ENCODE measurements at regions of chr1 and their contacts with region 1.

Region 1: GRCh38 chr1:91511386-91511785 is 10.7 kb downstream of the CDC7 start:
- DNase-seq: peak in 3 of 14 experiments; percentile 63 to 70 (median 68)
- ATAC-seq: peak; percentile 58
- H3K4me3 ChIP-seq: no peak overlapping the region
- H3K4me3 Mint-ChIP-seq: no peak overlapping the region
- H3K27ac ChIP-seq: no peak overlapping the region
- H3K27ac Mint-ChIP-seq: no peak overlapping the region
- H3K4me1 ChIP-seq: no peaks in the 10 kb centered on the region
- H3K4me1 Mint-ChIP-seq: peaks cover 6% of the 10 kb centered on the region
- H3K27me3 ChIP-seq: no peaks in the 10 kb centered on the region
- H3K27me3 Mint-ChIP-seq: no peaks in the 10 kb centered on the region
- CTCF ChIP-seq: peak; percentile 74

Region 2: DNA sequence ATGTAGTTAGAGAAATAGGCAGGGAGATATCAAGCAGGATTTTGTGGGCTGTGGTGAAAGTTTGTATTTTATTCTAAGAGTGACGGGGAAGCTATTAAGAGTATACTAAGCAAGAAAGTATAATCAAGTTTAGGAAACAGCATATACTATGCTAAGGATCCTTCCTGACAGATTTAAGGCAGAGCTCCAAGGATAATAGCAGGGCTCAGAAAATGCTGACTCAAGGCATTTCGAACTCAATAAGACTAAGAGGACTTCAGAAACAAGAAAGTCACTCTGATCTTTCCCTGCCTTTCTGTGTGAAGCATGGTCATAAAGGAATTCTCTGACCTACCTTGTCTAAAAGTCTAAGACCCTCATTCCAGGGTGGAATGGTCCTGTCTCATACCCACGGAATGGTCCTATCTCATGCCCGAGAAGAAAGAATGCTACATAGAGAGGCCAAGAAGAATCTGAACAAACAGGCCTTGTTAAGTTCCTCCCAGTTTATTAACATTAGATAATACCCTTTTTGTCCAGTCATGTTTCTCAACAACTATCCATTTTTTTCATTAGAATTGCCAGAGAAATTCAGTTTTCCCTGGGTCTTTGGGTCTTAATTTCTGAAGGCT is 165.9 kb before region 1 on chr1:
- CTCF ChIA-PET with region 1: no interaction called
- POLR2A ChIA-PET with region 1: no interaction called
- intact Hi-C with region 1: no loop called
- DNase-seq: no peak
- ATAC-seq: no peak
- H3K4me3 ChIP-seq: no peak overlapping the region
- H3K4me3 Mint-ChIP-seq: no peak overlapping the region
- H3K27ac ChIP-seq: no peak overlapping the region
- H3K27ac Mint-ChIP-seq: no peak overlapping the region
- H3K4me1 ChIP-seq: no peaks in the 10 kb centered on the region
- H3K4me1 Mint-ChIP-seq: no peaks in the 10 kb centered on the region
- H3K27me3 ChIP-seq: no peaks in the 10 kb centered on the region
- H3K27me3 Mint-ChIP-seq: no peaks in the 10 kb centered on the region
- CTCF ChIP-seq: no peak

Region 3: DNA sequence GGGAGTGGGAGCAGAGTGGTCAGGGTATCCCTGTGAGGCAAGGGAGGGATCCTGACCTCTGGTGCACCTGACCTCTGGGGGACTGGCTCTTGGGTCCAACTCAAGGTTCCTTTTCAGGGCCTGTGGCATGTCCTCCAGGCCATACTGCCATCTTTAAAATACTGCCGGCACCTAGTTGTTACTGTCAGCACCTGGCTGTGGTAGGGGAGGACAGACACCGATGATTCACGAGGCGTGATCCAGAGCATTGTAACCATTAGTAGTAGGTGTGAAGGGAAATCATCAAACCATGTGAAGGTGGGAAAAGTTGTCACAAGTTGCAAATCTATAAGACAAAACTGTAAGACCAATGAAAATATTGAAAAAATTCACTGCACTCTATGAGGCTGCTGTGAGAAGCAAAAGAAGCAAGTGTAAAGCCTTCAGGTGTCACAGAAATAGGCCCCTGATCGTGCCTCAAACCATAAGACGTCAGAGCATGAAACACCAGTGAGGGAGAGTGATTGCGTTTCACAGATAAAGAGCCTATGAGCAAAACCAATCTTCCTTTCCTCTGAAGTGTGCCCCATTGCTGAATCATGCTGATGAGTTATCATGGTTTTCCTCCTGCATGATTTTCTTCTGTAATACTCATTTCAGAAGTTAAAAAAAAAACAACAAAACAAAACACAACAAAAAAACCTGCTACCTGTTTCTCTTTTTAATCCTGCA is 44.6 kb after region 1 on chr1:
- CTCF ChIA-PET with region 1: interaction called, 3 read pairs
- POLR2A ChIA-PET with region 1: no interaction called
- intact Hi-C with region 1: loop called in 1 of 2 experiments (anchors 5 kb)
- DNase-seq: peak in 13 of 14 experiments; percentile 29 to 92 (median 46)
- ATAC-seq: peak; percentile 87
- H3K4me3 ChIP-seq: no peak overlapping the region
- H3K4me3 Mint-ChIP-seq: peak overlapping the region; percentile 2
- H3K27ac ChIP-seq: peak overlapping the region; percentile 33 to 83
- H3K27ac Mint-ChIP-seq: peak overlapping the region; percentile 90
- H3K4me1 ChIP-seq: peaks cover 66% of the 10 kb centered on the region
- H3K4me1 Mint-ChIP-seq: peaks cover 86% of the 10 kb centered on the region
- H3K27me3 ChIP-seq: no peaks in the 10 kb centered on the region
- H3K27me3 Mint-ChIP-seq: no peaks in the 10 kb centered on the region
- CTCF ChIP-seq: no peak

Region 4: GRCh38 chr1:91611498-91611917 is 100.1 kb after region 1 on chr1:
- CTCF ChIA-PET with region 1: no interaction called
- POLR2A ChIA-PET with region 1: no interaction called
- intact Hi-C with region 1: no loop called
- DNase-seq: no peak
- ATAC-seq: no peak
- H3K4me3 ChIP-seq: no peak overlapping the region
- H3K4me3 Mint-ChIP-seq: no peak overlapping the region
- H3K27ac ChIP-seq: no peak overlapping the region
- H3K27ac Mint-ChIP-seq: no peak overlapping the region
- H3K4me1 ChIP-seq: no peaks in the 10 kb centered on the region
- H3K4me1 Mint-ChIP-seq: no peaks in the 10 kb centered on the region
- H3K27me3 ChIP-seq: no peaks in the 10 kb centered on the region
- H3K27me3 Mint-ChIP-seq: no peaks in the 10 kb centered on the region
- CTCF ChIP-seq: no peak

Region 5: DNA sequence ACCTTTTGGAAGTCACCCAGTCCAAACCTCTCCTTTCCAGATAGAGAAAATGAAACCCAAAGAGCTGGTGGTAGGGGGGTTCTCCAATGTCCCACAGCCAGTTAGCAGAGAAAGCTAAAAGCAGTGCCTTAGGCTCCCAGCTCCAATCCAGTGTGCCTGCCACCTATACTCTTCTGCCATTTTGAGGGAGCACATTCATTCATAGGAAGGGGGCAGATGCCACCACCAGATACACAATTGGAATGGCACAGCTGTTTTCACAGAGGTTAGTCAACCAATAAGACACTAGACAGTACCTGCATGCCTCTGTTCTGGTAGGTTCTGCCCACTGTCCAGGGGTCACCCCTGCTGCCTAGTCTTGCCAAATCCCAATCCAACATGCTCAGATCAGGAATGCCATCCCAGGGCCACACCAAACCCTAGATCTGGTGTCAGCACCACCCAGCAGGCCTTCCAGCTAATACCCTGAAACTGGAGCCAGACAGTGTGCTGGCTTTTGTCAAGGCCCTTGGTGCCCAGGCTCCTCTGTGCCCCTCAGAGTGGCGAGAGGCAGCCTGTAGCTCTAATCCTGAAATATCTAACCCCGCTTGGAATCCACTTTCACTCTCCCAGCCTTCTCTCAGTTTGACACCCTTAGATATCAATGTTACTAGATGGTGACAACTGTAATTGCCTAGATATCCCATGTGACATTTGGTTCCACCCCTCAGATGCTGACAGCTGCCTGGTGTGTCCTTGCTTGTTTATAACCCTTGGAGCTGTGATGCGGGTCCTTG is 195.9 kb after region 1 on chr1:
- CTCF ChIA-PET with region 1: no interaction called
- POLR2A ChIA-PET with region 1: no interaction called
- intact Hi-C with region 1: loop called in 1 of 2 experiments (anchors 5 kb)
- DNase-seq: no peak
- ATAC-seq: no peak
- H3K4me3 ChIP-seq: no peak overlapping the region
- H3K4me3 Mint-ChIP-seq: no peak overlapping the region
- H3K27ac ChIP-seq: no peak overlapping the region
- H3K27ac Mint-ChIP-seq: no peak overlapping the region
- H3K4me1 ChIP-seq: no peaks in the 10 kb centered on the region
- H3K4me1 Mint-ChIP-seq: no peaks in the 10 kb centered on the region
- H3K27me3 ChIP-seq: no peaks in the 10 kb centered on the region
- H3K27me3 Mint-ChIP-seq: no peaks in the 10 kb centered on the region
- CTCF ChIP-seq: no peak

Region 6: GRCh38 chr1:91803847-91804545 is 292.6 kb after region 1 on chr1:
- CTCF ChIA-PET with region 1: no interaction called
- POLR2A ChIA-PET with region 1: no interaction called
- intact Hi-C with region 1: loop called (anchors 5 to 10 kb)
- DNase-seq: peak; percentile 49 to 94 (median 68)
- ATAC-seq: peak; percentile 54
- H3K4me3 ChIP-seq: peak overlapping the region; percentile 40
- H3K4me3 Mint-ChIP-seq: peak overlapping the region; percentile 58
- H3K27ac ChIP-seq: peak overlapping the region; percentile 97 to 99
- H3K27ac Mint-ChIP-seq: peak overlapping the region; percentile 94
- H3K4me1 ChIP-seq: peaks cover 43% of the 10 kb centered on the region
- H3K4me1 Mint-ChIP-seq: peaks cover 40% of the 10 kb centered on the region
- H3K27me3 ChIP-seq: no peaks in the 10 kb centered on the region
- H3K27me3 Mint-ChIP-seq: no peaks in the 10 kb centered on the region
- CTCF ChIP-seq: no peak

Region 7: GRCh38 chr1:91885716-91886506 is 374.5 kb after region 1 on chr1 and contains the start of gene TGFBR3:
- CTCF ChIA-PET with region 1: interaction called, 15 read pairs
- POLR2A ChIA-PET with region 1: interaction called, 7 read pairs
- intact Hi-C with region 1: loop called (anchors 2 to 5 kb)
- DNase-seq: peak; percentile 44 to 87 (median 74)
- ATAC-seq: peak; percentile 71
- H3K4me3 ChIP-seq: peak within 1 kb of the TSS; percentile 72
- H3K4me3 Mint-ChIP-seq: peak within 1 kb of the TSS; percentile 96
- H3K27ac ChIP-seq: peak within 1 kb of the TSS in 1 of 2 donors; percentile 21
- H3K27ac Mint-ChIP-seq: peak within 1 kb of the TSS; percentile 77
- H3K4me1 ChIP-seq: peaks cover 30% of the 10 kb centered on the region
- H3K4me1 Mint-ChIP-seq: peaks cover 35% of the 10 kb centered on the region
- H3K27me3 ChIP-seq: no peaks in the 10 kb centered on the region
- H3K27me3 Mint-ChIP-seq: no peaks in the 10 kb centered on the region
- CTCF ChIP-seq: peak; percentile 35
- total RNA-seq, gene TGFBR3: 31.5 to 36.6 TPM

Region 8: DNA sequence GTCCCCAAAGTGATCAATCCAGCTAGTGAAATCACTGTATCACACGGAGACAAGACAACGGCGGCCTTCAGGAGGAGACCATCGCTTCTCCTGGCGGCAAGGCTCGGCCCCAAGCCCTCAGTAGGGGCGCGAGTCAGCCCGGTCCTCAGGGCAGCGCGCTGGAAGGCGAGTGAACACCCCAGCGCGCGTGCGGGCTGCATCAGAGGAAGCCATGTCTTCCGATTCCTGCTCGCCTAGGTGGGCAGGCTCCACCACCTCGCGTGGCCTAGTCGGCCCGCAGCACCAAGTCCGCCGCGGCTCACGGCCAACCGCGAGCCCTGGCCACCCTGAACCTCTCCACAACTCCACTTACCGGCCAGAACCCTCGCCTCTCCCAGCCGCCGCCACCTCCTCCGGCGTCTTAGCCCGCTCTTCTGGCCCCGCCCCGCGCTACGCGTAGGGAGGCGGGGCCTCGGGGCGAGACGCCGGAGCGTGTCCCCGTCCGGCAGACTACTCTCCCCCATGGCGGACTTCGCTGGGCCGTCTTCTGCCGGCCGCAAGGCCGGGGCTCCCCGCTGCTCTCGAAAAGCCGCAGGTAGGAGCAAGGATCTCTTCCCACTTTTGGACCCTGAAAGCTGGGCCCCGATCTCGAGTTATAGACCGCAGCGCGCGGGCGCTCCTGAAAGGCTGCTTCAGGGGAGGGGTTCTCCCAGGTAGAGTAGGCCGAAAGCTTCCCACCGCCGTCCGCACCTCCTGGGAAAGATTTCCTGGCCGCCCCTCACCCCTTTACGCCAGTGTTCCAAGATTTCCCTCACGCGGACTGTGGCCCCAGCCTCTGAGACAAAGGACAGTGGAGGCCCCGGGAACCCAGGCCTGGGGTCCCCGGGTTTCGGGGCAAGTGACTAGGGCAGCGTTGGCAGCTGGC is 787.4 kb after region 1 on chr1 and contains the starts of genes GLMN and RPAP2:
- CTCF ChIA-PET with region 1: no interaction called
- POLR2A ChIA-PET with region 1: no interaction called
- intact Hi-C with region 1: loop called (anchors 5 to 10 kb)
- DNase-seq: peak; percentile 40 to 89 (median 60)
- ATAC-seq: peak; percentile 96
- H3K4me3 ChIP-seq: peak within 1 kb of the TSS; percentile 98
- H3K4me3 Mint-ChIP-seq: peak within 1 kb of the TSS; percentile 100
- H3K27ac ChIP-seq: peak within 1 kb of the TSS; percentile 86 to 93
- H3K27ac Mint-ChIP-seq: peak within 1 kb of the TSS; percentile 96
- H3K4me1 ChIP-seq: peaks cover 12% of the 10 kb centered on the region
- H3K4me1 Mint-ChIP-seq: peaks cover 54% of the 10 kb centered on the region
- H3K27me3 ChIP-seq: no peaks in the 10 kb centered on the region
- H3K27me3 Mint-ChIP-seq: no peaks in the 10 kb centered on the region
- CTCF ChIP-seq: no peak
- total RNA-seq, gene GLMN: 7.7 to 11.7 TPM
- total RNA-seq, gene RPAP2: 23.4 to 26.5 TPM

Measured in CD4-positive, alpha-beta T cell (primary cell).